Activated CD4-positive, alpha-beta memory T cell treated with anti-CD3 and anti-CD28 coated beads, Interleukin-2, amount 10 ng/mL, durations not matched to agents 7 days and 5 days (primary cell): ENCODE measurements at regions of chr3 and their contacts with region 1.

Region 1: DNA sequence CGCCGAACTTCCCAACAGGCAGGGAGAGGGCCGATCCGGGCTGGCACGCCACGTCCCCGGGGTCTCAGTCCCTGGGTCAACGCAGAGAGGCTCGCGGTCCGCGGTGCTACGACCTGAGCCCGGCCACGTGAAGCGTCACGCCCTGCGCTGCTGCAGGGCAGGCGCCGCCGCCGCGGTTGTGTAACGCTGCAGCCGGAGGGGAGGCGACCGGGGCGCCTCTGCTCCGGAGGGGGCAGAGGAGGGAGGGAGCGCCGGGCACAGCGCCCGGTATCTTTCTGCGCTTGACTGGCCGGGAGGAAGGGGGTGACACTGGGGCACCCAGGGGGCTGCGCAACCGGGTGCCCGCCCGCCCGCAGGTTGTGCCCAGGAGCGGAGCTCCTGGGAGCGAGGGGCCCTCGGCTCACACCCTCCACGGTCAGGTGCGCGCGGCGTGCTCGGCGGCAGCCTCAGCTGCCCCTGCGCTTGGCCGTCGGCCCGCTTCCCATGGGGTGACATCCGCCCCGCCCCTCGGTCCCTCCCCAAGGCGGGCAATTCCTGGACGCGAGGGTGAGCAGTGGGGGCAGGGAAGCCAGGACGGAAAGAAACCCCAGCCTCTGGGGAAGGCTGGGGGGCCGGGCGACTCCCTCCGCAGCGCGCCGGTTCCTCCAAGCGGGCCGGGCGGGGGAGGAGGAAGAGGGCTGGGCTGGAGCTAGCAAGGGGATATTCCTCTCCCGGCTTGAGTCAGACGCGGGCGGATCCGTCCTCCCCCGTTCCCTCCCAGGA is 852 bp upstream of the BHLHE40 start:
- DNase-seq: peak; percentile 92
- H3K4me3 Mint-ChIP-seq: peak overlapping the region; percentile 94
- H3K27ac Mint-ChIP-seq: peak overlapping the region; percentile 99
- H3K4me1 Mint-ChIP-seq: peaks cover 42% of the 10 kb centered on the region
- H3K27me3 Mint-ChIP-seq: no peaks in the 10 kb centered on the region

Region 2: DNA sequence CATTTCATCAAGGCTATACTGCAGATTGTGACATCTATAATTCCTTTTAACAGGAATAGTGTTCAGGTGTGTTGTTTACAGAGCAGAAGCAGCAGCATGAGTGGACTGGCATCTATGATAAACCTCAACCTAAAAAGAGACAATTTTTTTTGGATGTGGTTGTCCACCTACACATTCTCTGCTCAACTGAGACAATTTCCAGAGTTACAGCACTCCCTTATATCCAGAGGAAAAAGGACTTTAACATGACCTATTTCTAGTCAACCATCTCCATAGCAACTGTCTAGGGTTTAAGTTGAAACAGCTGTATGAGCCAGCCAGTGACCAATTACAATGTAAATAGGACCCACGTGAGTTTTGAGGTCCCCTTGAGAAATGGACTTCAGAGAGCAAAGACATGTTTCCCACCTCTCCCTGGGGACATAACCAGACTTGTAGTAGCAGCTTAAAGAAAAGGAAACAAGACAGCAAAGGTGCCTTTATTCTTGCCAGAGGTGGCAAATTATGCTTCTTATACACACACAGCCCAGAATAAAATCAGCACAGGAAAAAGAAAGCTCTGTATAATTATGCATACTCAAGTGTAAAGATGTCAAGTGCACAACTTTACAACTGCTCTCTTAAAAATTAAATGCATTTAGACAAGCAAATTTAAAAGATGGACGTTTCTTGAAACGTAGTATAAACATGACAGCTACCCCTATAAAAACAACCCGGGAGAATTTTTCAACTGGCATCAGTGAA is 551.6 kb before region 1 on chr3:
- CTCF ChIA-PET with region 1: no interaction called
- POLR2A ChIA-PET with region 1: no interaction called
- DNase-seq: no peak
- H3K4me3 Mint-ChIP-seq: no peak overlapping the region
- H3K27ac Mint-ChIP-seq: no peak overlapping the region
- H3K4me1 Mint-ChIP-seq: peaks cover 14% of the 10 kb centered on the region
- H3K27me3 Mint-ChIP-seq: no peaks in the 10 kb centered on the region

Region 3: DNA sequence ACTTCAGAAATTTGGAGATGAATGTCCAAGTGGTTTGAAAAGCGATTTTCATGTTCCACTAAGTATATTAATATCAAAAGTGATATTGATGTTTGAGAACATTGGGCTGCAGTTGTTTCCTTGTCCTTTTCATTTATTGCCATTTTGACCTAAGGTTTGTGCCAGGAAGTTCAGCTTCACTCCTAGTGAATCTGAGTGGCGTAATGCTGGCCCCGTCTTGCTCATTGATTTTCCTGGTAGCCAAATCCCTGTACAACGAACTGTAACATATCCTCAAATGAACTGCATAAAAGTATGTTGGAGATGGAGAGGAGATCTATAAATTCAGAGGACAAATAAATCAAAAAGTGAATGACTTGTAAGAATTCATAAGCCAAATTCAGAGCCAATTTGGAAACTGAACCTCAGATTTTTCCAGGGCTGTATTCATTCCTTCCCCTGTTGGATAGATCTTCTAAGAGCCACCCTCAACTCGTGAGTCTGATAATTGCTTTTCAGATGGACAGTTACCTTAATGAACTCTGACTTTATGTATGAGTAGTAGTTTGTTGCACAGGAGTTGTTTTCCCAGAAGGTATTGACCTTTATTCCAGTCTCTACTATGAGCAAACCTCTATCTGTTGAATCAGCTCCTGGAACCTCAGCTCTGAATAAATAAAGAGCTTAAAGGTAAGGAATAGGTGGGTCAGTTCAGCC is 412.4 kb before region 1 on chr3:
- CTCF ChIA-PET with region 1: no interaction called
- POLR2A ChIA-PET with region 1: no interaction called
- DNase-seq: no peak
- H3K4me3 Mint-ChIP-seq: no peak overlapping the region
- H3K27ac Mint-ChIP-seq: no peak overlapping the region
- H3K4me1 Mint-ChIP-seq: peaks cover under 1% of the 10 kb centered on the region
- H3K27me3 Mint-ChIP-seq: no peaks in the 10 kb centered on the region

Region 4: DNA sequence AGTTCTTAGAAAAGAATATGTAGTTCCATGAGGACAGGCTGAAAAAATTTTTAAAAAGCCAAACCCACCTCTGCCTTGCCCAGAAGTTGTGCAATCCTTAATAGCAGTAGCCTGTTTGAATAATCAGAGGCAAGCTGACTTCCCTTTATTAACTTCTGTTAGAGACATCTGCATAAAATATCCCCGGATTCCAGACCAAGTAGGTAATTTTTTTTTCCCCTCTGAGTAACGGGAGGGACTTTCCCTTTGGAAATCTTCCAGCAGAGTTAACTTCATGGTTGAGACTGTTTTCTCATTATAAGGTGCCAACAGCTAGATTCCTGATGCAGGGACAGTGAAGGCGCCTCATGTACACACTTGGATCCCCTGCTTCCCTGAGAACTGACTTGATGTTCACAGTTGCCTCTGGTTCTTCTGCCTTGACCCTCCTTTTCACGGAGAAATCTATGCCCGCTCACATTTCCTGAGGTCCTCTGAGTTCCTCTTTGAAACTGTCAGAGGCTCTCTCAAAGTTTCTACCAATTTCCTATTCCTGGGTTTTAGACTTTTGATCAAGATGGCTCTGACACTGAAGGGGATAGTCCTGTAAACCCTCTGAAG is 226.8 kb before region 1 on chr3:
- CTCF ChIA-PET with region 1: interaction called, 5 read pairs
- POLR2A ChIA-PET with region 1: interaction called, 10 read pairs
- DNase-seq: no peak
- H3K4me3 Mint-ChIP-seq: no peak overlapping the region
- H3K27ac Mint-ChIP-seq: peak overlapping the region; percentile 55
- H3K4me1 Mint-ChIP-seq: peaks cover 64% of the 10 kb centered on the region
- H3K27me3 Mint-ChIP-seq: no peaks in the 10 kb centered on the region

Region 5: GRCh38 chr3:4834403-4834866 is 143.9 kb before region 1 on chr3:
- CTCF ChIA-PET with region 1: interaction called, 106 read pairs
- POLR2A ChIA-PET with region 1: interaction called, 822 read pairs
- DNase-seq: peak; percentile 88
- H3K4me3 Mint-ChIP-seq: peak overlapping the region; percentile 69
- H3K27ac Mint-ChIP-seq: peak overlapping the region; percentile 93
- H3K4me1 Mint-ChIP-seq: peaks cover 87% of the 10 kb centered on the region
- H3K27me3 Mint-ChIP-seq: no peaks in the 10 kb centered on the region

Region 6: GRCh38 chr3:4906107-4906621 is 72.2 kb before region 1 on chr3:
- CTCF ChIA-PET with region 1: interaction called, 17 read pairs
- POLR2A ChIA-PET with region 1: interaction called, 85 read pairs
- DNase-seq: peak; percentile 46
- H3K4me3 Mint-ChIP-seq: peak overlapping the region; percentile 64
- H3K27ac Mint-ChIP-seq: peak overlapping the region; percentile 80
- H3K4me1 Mint-ChIP-seq: peaks cover 88% of the 10 kb centered on the region
- H3K27me3 Mint-ChIP-seq: no peaks in the 10 kb centered on the region

Region 7: GRCh38 chr3:4994823-4995499 is 16.6 kb after region 1 on chr3:
- CTCF ChIA-PET with region 1: interaction called, 9 read pairs
- POLR2A ChIA-PET with region 1: interaction called, 321 read pairs
- DNase-seq: no peak
- H3K4me3 Mint-ChIP-seq: no peak overlapping the region
- H3K27ac Mint-ChIP-seq: no peak overlapping the region
- H3K4me1 Mint-ChIP-seq: peaks cover 39% of the 10 kb centered on the region
- H3K27me3 Mint-ChIP-seq: no peaks in the 10 kb centered on the region

Region 8: DNA sequence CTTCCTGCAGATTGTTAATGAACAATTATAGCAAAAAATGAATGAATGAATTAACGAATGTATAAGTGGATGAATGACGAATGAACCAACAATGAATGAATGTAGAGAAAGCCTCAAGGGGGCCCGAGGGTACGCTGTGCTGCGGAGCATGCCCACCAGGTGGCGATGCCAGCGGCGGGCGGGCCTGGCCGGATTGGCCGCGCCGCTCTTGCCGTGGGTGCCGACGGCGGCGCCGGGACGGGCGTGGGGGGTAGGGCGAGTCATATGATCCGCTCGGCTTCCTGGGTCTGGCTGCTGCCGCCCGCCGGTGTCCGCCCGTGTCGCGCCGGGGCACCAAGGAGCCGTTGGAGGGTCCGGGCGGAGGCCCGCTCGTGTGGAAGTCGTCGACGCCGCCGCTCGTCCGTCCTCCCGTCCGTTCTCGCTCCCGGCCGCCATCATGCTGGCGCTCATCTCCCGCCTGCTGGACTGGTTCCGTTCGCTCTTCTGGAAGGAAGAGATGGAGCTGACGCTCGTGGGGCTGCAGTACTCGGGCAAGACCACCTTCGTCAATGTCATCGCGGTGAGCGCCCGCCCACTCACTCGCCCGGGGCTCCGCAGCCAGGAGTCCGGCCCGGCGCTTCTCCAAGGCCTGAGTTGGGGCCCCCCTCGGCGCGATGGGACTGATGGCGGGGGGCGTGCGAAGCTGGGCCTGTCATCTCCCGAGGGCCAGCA is 143.8 kb after region 1 on chr3 and contains the start of gene ARL8B:
- CTCF ChIA-PET with region 1: interaction called, 3 read pairs
- POLR2A ChIA-PET with region 1: interaction called, 12 read pairs
- DNase-seq: peak; percentile 93
- H3K4me3 Mint-ChIP-seq: peak within 1 kb of the TSS; percentile 77
- H3K27ac Mint-ChIP-seq: peak within 1 kb of the TSS; percentile 83
- H3K4me1 Mint-ChIP-seq: peaks cover 31% of the 10 kb centered on the region
- H3K27me3 Mint-ChIP-seq: no peaks in the 10 kb centered on the region
- total RNA-seq, gene ARL8B: 38.2 to 45.7 TPM